ENCODE measurements at regions of chr15 and their contacts with region 1.

Region 1: DNA sequence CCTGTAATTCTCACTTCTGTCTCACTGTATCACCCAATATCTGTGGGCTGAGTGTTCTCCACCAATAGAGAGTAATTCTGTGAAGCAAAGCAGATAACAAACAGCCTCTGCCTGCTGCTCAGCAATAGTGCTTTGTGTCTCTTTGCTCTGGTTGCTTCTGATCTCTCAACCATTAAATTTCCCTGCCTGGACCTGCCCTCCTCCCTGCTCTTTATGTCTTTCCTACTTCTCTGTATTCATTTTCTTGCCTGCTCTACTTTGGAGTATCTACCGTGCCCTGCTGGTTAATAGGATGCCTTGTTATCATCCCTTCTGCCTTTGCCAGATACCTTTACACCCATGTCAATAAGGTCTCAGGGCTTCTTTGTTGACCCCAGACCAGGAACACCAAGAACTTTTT is 102.9 kb upstream of the CGNL1 start:
- DNase-seq: no peak
- H3K27ac ChIP-seq: no peak overlapping the region
- CTCF ChIP-seq: no peak

Region 2: GRCh38 chr15:55407949-55408791 is 1865.2 kb before region 1 on chr15 and contains the starts of genes CCPG1 and PIERCE2:
- CTCF ChIA-PET with region 1: no interaction called
- POLR2A ChIA-PET with region 1: no interaction called
- DNase-seq: peak; percentile 90
- H3K27ac ChIP-seq: peak within 1 kb of the TSS; percentile 84
- CTCF ChIP-seq: peak; percentile 82

Region 3: GRCh38 chr15:56918046-56918938 is 355.1 kb before region 1 on chr15 and contains the start of gene TCF12:
- CTCF ChIA-PET with region 1: no interaction called
- POLR2A ChIA-PET with region 1: no interaction called
- DNase-seq: peak; percentile 93
- H3K27ac ChIP-seq: peak within 1 kb of the TSS; percentile 89
- CTCF ChIP-seq: peak; percentile 37

Region 4: GRCh38 chr15:56943403-56943802 is 330.0 kb before region 1 on chr15:
- CTCF ChIA-PET with region 1: no interaction called
- POLR2A ChIA-PET with region 1: no interaction called
- DNase-seq: no peak
- H3K27ac ChIP-seq: no peak overlapping the region
- CTCF ChIP-seq: no peak

Region 5: GRCh38 chr15:57069423-57069822 is 204.0 kb before region 1 on chr15:
- CTCF ChIA-PET with region 1: interaction called, 10 read pairs
- POLR2A ChIA-PET with region 1: no interaction called
- DNase-seq: no peak
- H3K27ac ChIP-seq: no peak overlapping the region
- CTCF ChIP-seq: no peak

Measured in RWPE1 (cell line).